Naive thymus-derived CD4-positive, alpha-beta T cell (primary cell): ENCODE measurements at regions of chr10 and their contacts with region 1.

Region 1: DNA sequence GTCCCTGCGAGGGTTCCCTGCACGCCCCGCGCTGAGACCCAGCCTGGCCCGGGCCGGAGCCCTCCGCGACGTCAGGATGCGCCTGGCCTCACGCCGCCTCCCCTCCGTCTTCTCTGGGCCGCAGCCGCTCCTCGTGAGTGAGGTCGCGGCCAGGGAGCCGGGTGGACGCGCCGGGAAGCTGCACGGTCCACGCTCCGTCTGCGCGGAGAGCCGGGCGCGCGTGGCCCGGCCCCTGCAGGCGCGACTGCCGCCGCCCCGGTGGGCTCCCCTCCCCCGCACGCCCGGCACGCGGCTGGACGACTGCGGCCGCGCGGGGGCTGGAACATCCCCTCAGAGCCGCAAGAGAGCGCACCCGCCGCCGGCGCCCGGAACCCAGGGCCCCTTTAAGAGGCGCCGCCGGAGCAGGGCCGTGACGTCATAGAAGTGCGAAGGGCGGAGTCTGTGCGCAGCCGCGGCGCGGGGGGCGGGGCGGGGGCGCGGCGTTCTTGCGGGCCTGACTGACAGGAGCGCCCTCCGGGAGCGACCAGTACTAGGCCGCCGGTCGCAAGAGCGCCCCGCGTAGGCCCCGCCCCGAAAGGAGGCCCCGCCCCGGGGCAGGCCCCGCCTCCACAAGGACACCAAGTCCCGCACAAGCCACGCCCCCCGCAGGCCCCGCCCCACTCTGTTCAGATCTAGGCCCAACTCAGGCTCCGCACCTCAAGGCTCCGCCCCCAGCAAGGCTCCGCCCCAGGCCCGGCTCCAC is 445 bp upstream of the INPP5A start:
- DNase-seq: peak; percentile 100
- ATAC-seq: peak; percentile 94
- H3K4me3 ChIP-seq: peak overlapping the region; percentile 57
- H3K4me3 Mint-ChIP-seq: peak overlapping the region; percentile 66 to 98 (median 78)
- H3K27ac ChIP-seq: peak overlapping the region; percentile 81
- H3K27ac Mint-ChIP-seq: peak overlapping the region in 3 of 9 donors; percentile 72 to 78 (median 76)
- H3K4me1 ChIP-seq: peaks cover 11 to 41% of the 10 kb centered on the region in 2 donors
- H3K4me1 Mint-ChIP-seq: peaks cover 33 to 53% (median 42%) of the 10 kb centered on the region in 7 donors
- H3K27me3 ChIP-seq: no peaks in the 10 kb centered on the region
- H3K27me3 Mint-ChIP-seq: peaks cover 0 to 27% (median 0%) of the 10 kb centered on the region in 5 donors

Region 2: GRCh38 chr10:132185601-132186487 is 351.3 kb before region 1 on chr10:
- CTCF ChIA-PET with region 1: no interaction called
- POLR2A ChIA-PET with region 1: no interaction called
- intact Hi-C with region 1: loop called (anchors 1 to 10 kb)
- DNase-seq: peak; percentile 53 to 79 (median 66)
- ATAC-seq: peak; percentile 92
- H3K4me3 ChIP-seq: peak overlapping the region; percentile 27
- H3K4me3 Mint-ChIP-seq: peak overlapping the region; percentile 16 to 84 (median 63)
- H3K27ac ChIP-seq: peak overlapping the region; percentile 55
- H3K27ac Mint-ChIP-seq: peak overlapping the region in 3 of 9 donors; percentile 29 to 47 (median 41)
- H3K4me1 ChIP-seq: peaks cover 0 to 7% of the 10 kb centered on the region in 2 donors
- H3K4me1 Mint-ChIP-seq: peaks cover 3 to 28% (median 17%) of the 10 kb centered on the region in 7 donors
- H3K27me3 ChIP-seq: peaks cover 0 to 10% of the 10 kb centered on the region in 2 donors
- H3K27me3 Mint-ChIP-seq: peaks cover 0 to 38% (median 31%) of the 10 kb centered on the region in 5 donors

Region 3: GRCh38 chr10:132264966-132265901 is 271.9 kb before region 1 on chr10:
- CTCF ChIA-PET with region 1: no interaction called
- POLR2A ChIA-PET with region 1: no interaction called
- intact Hi-C with region 1: no loop called
- DNase-seq: no peak
- ATAC-seq: no peak
- H3K4me3 ChIP-seq: no peak overlapping the region
- H3K4me3 Mint-ChIP-seq: no peak overlapping the region
- H3K27ac ChIP-seq: no peak overlapping the region
- H3K27ac Mint-ChIP-seq: no peak overlapping the region
- H3K4me1 ChIP-seq: peaks cover 0 to 5% of the 10 kb centered on the region in 2 donors
- H3K4me1 Mint-ChIP-seq: peaks cover 4 to 20% (median 16%) of the 10 kb centered on the region in 7 donors
- H3K27me3 ChIP-seq: no peaks in the 10 kb centered on the region
- H3K27me3 Mint-ChIP-seq: no peaks in the 10 kb centered on the region

Region 4: GRCh38 chr10:132446661-132447194 is 90.4 kb before region 1 on chr10:
- CTCF ChIA-PET with region 1: interaction called, 4 read pairs
- POLR2A ChIA-PET with region 1: interaction called, 3 read pairs
- intact Hi-C with region 1: loop called in 1 of 2 experiments (anchors 1 kb)
- DNase-seq: peak in 8 of 9 donors; percentile 58 to 75 (median 70)
- ATAC-seq: peak; percentile 44
- H3K4me3 ChIP-seq: peak overlapping the region; percentile 60
- H3K4me3 Mint-ChIP-seq: peak overlapping the region; percentile 50 to 89 (median 78)
- H3K27ac ChIP-seq: peak overlapping the region; percentile 98
- H3K27ac Mint-ChIP-seq: peak overlapping the region; percentile 96 to 100 (median 98)
- H3K4me1 ChIP-seq: peaks cover 21 to 50% of the 10 kb centered on the region in 2 donors
- H3K4me1 Mint-ChIP-seq: peaks cover 25 to 64% (median 42%) of the 10 kb centered on the region in 7 donors
- H3K27me3 ChIP-seq: no peaks in the 10 kb centered on the region
- H3K27me3 Mint-ChIP-seq: no peaks in the 10 kb centered on the region

Region 5: DNA sequence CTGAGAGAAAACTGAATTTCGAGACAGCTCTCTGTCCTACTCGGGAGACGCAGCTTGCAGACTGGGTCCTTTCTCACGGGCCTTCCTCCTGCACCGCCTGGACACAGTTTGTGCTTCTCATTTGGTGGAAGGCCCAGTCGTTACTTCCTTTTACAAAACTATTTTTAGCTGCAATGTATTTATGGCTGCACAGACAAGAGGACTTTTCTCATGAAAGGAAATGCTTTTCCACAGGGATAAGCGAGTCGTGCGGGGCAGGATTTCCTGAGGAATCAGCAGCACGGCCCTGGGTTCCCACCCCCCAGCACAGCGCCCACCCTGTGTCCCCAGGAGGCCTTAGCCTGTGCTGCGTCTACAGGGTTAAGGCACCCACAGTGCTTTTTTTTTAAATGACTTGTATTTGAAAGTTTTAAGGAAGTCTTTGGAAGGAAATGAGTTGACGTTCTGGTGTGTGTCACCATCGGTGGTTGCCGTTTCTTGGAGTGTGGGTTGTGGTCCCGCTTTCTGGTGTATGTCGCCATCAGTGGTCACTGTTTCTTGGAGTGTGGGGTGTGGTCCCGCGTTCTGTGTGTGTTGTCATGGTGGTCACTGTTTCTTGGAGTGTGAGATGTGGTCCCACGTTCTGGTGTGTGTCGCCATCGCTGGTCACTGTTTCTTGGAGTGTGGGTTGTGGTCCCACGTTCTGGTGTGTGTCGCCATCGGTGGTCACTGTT is 51.3 kb after region 1 on chr10:
- CTCF ChIA-PET with region 1: interaction called, 4 read pairs
- POLR2A ChIA-PET with region 1: no interaction called
- intact Hi-C with region 1: loop called in 1 of 2 experiments (anchors 10 kb)
- DNase-seq: peak in 4 of 9 donors; percentile 18 to 49 (median 22)
- ATAC-seq: peak; percentile 79
- H3K4me3 ChIP-seq: no peak overlapping the region
- H3K4me3 Mint-ChIP-seq: peak overlapping the region; percentile 57 to 85 (median 74)
- H3K27ac ChIP-seq: no peak overlapping the region
- H3K27ac Mint-ChIP-seq: peak overlapping the region in 7 of 9 donors; percentile 3 to 85 (median 69)
- H3K4me1 ChIP-seq: peaks cover 5 to 26% of the 10 kb centered on the region in 2 donors
- H3K4me1 Mint-ChIP-seq: peaks cover 47 to 86% (median 71%) of the 10 kb centered on the region in 7 donors
- H3K27me3 ChIP-seq: no peaks in the 10 kb centered on the region
- H3K27me3 Mint-ChIP-seq: peaks cover 0 to 2% (median 0%) of the 10 kb centered on the region in 5 donors

Region 6: GRCh38 chr10:133261726-133262325 is 724.7 kb after region 1 on chr10:
- CTCF ChIA-PET with region 1: no interaction called
- POLR2A ChIA-PET with region 1: no interaction called
- intact Hi-C with region 1: loop called in 1 of 2 experiments (anchors 5 kb)
- DNase-seq: peak; percentile 60 to 84 (median 72)
- ATAC-seq: peak; percentile 65
- H3K4me3 ChIP-seq: peak overlapping the region; percentile 52
- H3K4me3 Mint-ChIP-seq: peak overlapping the region; percentile 55 to 83 (median 80)
- H3K27ac ChIP-seq: peak overlapping the region; percentile 87
- H3K27ac Mint-ChIP-seq: peak overlapping the region; percentile 47 to 93 (median 80)
- H3K4me1 ChIP-seq: peaks cover 53 to 68% of the 10 kb centered on the region in 2 donors
- H3K4me1 Mint-ChIP-seq: peaks cover 51 to 81% (median 67%) of the 10 kb centered on the region in 7 donors
- H3K27me3 ChIP-seq: no peaks in the 10 kb centered on the region
- H3K27me3 Mint-ChIP-seq: peaks cover 0 to 2% (median 0%) of the 10 kb centered on the region in 5 donors

Region 7: GRCh38 chr10:133394064-133394663 is 857.0 kb after region 1 on chr10 and contains the start of gene MTG1:
- CTCF ChIA-PET with region 1: no interaction called
- POLR2A ChIA-PET with region 1: no interaction called
- intact Hi-C with region 1: loop called in 1 of 2 experiments (anchors 5 kb)
- DNase-seq: peak; percentile 84 to 99 (median 91)
- ATAC-seq: peak; percentile 94
- H3K4me3 ChIP-seq: peak within 1 kb of the TSS; percentile 72
- H3K4me3 Mint-ChIP-seq: peak within 1 kb of the TSS; percentile 89 to 98 (median 92)
- H3K27ac ChIP-seq: peak within 1 kb of the TSS; percentile 81
- H3K27ac Mint-ChIP-seq: peak within 1 kb of the TSS; percentile 71 to 96 (median 89)
- H3K4me1 ChIP-seq: peaks cover 32 to 33% of the 10 kb centered on the region in 2 donors
- H3K4me1 Mint-ChIP-seq: peaks cover 19 to 49% (median 39%) of the 10 kb centered on the region in 7 donors
- H3K27me3 ChIP-seq: no peaks in the 10 kb centered on the region
- H3K27me3 Mint-ChIP-seq: peaks cover 0 to 2% (median 0%) of the 10 kb centered on the region in 5 donors
- total RNA-seq, gene MTG1: 51.0 to 67.1 (median 57.2) TPM